ENCODE measurements at regions of chr2 and their contacts with region 1.

Region 1: GRCh38 chr2:32063310-32064161 is at the start of gene SPAST:
- DNase-seq: peak; percentile 98
- H3K4me3 ChIP-seq: peak within 1 kb of the TSS; percentile 55 to 90 (median 71)
- H3K27ac ChIP-seq: peak within 1 kb of the TSS; percentile 84 to 91 (median 90)
- H3K4me1 ChIP-seq: peaks cover 0 to 18% (median 9%) of the 10 kb centered on the region in 4 donors
- H3K27me3 ChIP-seq: no peaks in the 10 kb centered on the region
- CTCF ChIP-seq: peak; percentile 66 to 79 (median 74)
- EP300 ChIP-seq: peak in 1 of 4 donors; percentile 17
- POLR2A ChIP-seq: peak in 1 of 2 donors; percentile 30
- total RNA-seq, gene SPAST: 12.2 to 24.2 (median 15.1) TPM

Region 2: GRCh38 chr2:32010670-32011484 is 52.7 kb before region 1 on chr2 and contains the start of gene MEMO1:
- intact Hi-C with region 1: loop called (anchors 1 kb)
- DNase-seq: peak; percentile 96
- H3K4me3 ChIP-seq: peak within 1 kb of the TSS; percentile 64 to 97 (median 88)
- H3K27ac ChIP-seq: peak within 1 kb of the TSS; percentile 91 to 95 (median 92)
- H3K4me1 ChIP-seq: peaks cover 3 to 42% (median 23%) of the 10 kb centered on the region in 4 donors
- H3K27me3 ChIP-seq: no peaks in the 10 kb centered on the region
- CTCF ChIP-seq: no peak
- EP300 ChIP-seq: no peak
- POLR2A ChIP-seq: peak; percentile 21 to 39
- total RNA-seq, gene MEMO1: 18.3 to 39.6 (median 24.6) TPM

Region 3: DNA sequence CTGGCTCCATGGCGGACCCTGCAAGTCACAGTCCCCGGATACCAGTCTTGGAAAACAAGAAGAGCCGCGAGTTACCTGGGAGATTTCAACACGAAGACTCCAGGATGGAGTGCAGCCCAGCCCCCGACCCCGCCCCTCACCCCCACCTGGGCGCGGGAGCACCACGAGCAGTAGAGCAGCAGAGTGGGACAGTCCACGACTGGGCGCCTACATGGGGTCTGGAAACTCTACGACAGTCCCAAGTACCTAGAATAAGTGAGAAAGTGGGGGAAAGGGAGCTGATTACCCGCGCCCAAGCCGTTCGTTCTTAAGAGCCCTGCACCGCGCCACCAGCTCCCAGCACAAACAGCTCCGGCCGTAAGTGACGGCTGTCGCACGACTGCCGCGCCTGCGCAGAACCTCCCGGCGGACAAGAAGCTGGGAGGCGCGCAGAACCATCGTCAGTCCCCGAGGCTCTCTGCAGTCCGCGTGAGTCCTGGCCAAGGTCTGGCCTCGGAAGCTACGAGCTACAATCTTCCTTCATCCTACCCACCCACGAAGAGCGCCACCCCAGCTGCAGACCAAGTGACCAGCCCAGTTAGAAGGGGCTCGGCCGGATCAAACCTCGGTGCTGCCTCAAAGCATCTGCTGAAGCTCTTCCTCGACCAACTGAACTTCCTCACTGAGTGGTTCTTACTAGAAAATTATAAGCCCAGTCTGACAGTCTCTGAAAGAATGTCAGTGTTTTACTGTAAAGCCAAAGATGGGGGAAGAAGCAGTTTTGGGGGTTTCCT is 23.9 kb before region 1 on chr2 and contains the start of gene DPY30:
- intact Hi-C with region 1: loop called (anchors 1 kb)
- DNase-seq: peak; percentile 96
- H3K4me3 ChIP-seq: peak within 1 kb of the TSS; percentile 85 to 94 (median 93)
- H3K27ac ChIP-seq: peak within 1 kb of the TSS; percentile 79 to 90 (median 84)
- H3K4me1 ChIP-seq: peaks cover 0 to 14% (median 9%) of the 10 kb centered on the region in 4 donors
- H3K27me3 ChIP-seq: no peaks in the 10 kb centered on the region
- CTCF ChIP-seq: no peak
- EP300 ChIP-seq: no peak
- POLR2A ChIP-seq: peak; percentile 77 to 78
- total RNA-seq, gene DPY30: 67.2 to 102 (median 69.0) TPM

Region 4: DNA sequence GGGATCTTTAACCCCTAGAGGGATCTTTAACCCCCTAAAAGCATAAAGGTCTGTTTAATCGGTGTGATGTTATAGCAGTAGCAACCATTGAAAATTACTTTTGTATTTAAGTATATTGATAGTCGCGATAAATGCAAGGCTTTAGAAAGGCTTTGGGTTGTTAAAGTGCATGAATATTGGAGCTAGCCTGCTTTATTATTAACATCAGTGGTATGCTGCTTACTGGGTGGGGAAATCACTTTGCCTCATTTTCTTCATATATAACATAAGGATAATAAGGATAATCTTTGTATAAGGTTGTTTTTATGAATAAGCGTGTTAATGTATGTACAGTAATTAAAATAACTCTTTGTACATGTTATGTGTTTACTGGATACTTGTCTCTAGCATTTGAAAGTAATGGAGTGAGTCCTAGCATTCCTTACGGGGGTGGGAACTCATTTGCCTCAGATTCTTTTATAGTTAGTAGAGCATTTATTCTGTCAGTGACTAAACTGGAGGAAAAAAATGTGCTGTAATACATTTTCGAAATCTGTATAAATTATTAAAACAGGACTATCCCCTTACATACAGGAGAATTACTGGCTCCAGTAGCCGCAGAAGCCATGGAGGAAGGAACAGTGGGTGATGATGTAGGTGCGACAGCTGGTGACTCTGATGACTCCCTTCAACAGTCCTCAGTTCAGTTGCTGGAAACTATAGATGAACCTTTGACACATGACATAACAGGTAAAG is 415.5 kb after region 1 on chr2:
- intact Hi-C with region 1: no loop called
- DNase-seq: no peak
- H3K4me3 ChIP-seq: no peak overlapping the region
- H3K27ac ChIP-seq: no peak overlapping the region
- H3K4me1 ChIP-seq: peaks cover 0 to 8% (median 4%) of the 10 kb centered on the region in 4 donors
- H3K27me3 ChIP-seq: no peaks in the 10 kb centered on the region
- CTCF ChIP-seq: no peak
- EP300 ChIP-seq: no peak
- POLR2A ChIP-seq: no peak